PC-9 (cell line): ENCODE measurements at regions of chr6 and their contacts with region 1.

Region 1: DNA sequence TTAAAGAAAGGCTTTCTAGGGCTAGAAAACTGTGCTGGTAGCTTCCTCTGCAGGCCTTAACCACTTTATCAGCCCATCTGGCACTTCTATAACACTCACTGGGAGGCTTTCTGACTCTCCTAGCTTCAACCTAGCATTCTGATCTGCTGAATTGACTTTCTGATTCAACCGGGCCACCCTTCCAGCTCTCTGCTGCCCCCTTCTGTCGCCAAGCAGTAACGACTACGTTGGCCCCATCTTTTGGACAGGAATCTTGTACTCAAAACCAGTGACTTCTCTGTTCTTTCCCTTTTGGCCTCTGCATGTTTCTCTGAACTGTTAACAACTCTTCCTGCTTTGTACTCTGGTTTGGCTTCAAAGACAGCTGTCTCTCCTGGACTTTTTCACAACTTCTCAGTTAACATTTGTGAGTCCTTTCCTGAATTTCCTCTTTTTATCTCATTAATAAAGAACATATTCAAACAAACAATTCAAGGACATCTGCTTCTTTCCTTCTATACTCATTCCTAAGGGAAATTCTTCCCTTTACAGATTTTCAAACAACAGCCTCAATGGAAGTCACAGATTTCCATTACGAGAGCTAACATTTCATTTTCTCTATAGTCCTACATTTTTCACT is 43.9 kb upstream of the FAM135A start:
- DNase-seq: peak; percentile 46 to 67
- H3K4me3 ChIP-seq: no peak overlapping the region
- H3K27ac ChIP-seq: no peak overlapping the region
- H3K4me1 ChIP-seq: no peaks in the 10 kb centered on the region; the same call in 1 of the 2 replicates
- H3K27me3 ChIP-seq: peaks cover 65% of the 10 kb centered on the region
- CTCF ChIP-seq: peak; percentile 90

Region 2: DNA sequence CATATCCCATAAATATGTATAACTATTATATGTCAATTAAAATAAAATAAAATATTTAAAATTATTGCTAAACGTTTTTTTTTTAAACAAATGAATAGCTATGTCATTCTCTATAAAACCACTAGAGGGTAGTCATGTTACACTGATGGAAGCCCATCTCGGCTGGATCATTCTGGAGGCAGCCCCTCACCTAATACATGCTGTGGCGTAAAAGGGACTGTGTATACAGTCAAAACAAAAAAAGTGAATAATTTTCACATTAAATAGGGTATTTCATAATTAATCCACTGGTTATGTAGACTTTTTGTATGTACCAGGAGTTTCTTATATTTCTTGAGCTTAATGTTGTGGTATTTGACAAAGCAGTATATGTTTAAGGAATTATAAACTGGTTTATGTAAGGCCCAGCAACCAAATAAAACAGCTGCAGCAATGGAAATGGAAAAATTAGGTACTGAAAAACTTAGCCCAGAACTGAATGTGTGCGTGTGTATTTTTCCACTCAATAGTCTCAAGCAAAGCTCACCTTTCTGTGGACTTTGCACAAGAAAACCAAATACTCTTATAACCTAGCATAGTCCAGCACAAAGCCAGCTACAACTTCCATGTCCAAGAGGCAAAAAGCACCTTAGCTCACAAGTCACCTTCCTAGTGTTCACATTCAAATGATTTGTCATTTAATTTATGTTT is 148.3 kb before region 1 on chr6:
- CTCF ChIA-PET with region 1: interaction called, 11 read pairs
- POLR2A ChIA-PET with region 1: no interaction called
- intact Hi-C with region 1: loop called (anchors 2 kb)
- DNase-seq: no peak
- H3K4me3 ChIP-seq: no peak overlapping the region
- H3K27ac ChIP-seq: no peak overlapping the region
- H3K4me1 ChIP-seq: no peaks in the 10 kb centered on the region
- H3K27me3 ChIP-seq: peaks cover 4% of the 10 kb centered on the region; the same call in 1 of the 2 replicates
- CTCF ChIP-seq: peak; percentile 86

Region 3: GRCh38 chr6:70310063-70310694 is 59.3 kb before region 1 on chr6:
- CTCF ChIA-PET with region 1: interaction called, 10 read pairs
- POLR2A ChIA-PET with region 1: no interaction called
- intact Hi-C with region 1: loop called (anchors 1 kb)
- DNase-seq: peak in 1 of 2 experiments; percentile 48
- H3K4me3 ChIP-seq: no peak overlapping the region
- H3K27ac ChIP-seq: no peak overlapping the region
- H3K4me1 ChIP-seq: no peaks in the 10 kb centered on the region
- H3K27me3 ChIP-seq: peaks cover 49% of the 10 kb centered on the region
- CTCF ChIP-seq: peak; percentile 78

Region 4: DNA sequence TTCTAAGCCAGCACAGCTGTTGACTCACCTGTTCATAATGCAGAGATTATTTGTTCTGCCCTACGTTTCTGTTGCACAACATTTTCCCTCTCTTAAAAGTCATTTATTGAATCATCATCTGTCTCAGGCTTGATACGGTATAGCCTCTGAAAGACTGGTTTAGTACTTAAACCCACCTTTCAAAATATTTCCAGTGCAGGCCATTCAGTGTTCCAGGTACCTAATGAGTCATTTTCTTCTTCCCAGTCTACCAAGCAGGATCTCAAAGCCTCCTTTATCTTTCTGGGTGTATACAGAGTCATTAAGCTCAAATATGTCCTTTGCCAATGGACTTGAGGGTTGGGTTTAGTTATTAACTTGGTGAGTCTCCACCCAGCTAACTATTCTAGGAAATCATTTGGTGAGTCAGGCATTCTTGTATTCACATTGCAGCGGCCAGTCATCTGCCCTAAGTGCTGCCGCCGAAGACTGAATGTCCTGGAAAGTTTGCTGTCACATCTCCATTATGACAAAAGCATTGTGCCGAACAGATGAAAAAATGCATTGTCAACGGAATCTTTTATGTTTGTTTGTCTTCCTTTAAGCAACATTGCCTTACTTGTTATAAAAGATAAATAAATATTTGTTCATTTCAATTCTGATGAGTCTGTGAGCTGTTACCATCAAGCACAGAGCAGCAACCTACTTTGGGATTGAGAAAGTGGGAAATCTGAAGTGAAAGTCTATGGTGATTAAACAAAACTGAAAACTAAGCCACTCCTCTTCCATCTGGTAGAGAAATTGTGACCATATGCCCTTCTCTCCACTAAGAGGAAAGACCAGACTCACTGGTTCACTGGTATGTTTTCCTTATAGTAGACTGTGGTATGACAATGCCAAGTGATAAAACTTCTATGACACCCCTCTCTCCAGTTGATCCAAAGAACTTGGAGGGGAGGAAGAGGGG is 29.6 kb after region 1 on chr6:
- CTCF ChIA-PET with region 1: interaction called, 3 read pairs
- POLR2A ChIA-PET with region 1: no interaction called
- intact Hi-C with region 1: loop called (anchors 2 kb)
- DNase-seq: peak; percentile 60 to 99
- H3K4me3 ChIP-seq: peak overlapping the region; percentile 43; the same call in 1 of the 2 replicates
- H3K27ac ChIP-seq: peak overlapping the region; percentile 85
- H3K4me1 ChIP-seq: peaks cover 47% of the 10 kb centered on the region
- H3K27me3 ChIP-seq: no peaks in the 10 kb centered on the region
- CTCF ChIP-seq: no peak

Region 5: GRCh38 chr6:70686548-70687133 is 317.2 kb after region 1 on chr6:
- CTCF ChIA-PET with region 1: no interaction called
- POLR2A ChIA-PET with region 1: no interaction called
- intact Hi-C with region 1: loop called (anchors 5 kb)
- DNase-seq: peak in 1 of 2 experiments; percentile 40
- H3K4me3 ChIP-seq: no peak overlapping the region
- H3K27ac ChIP-seq: no peak overlapping the region
- H3K4me1 ChIP-seq: peaks cover 6% of the 10 kb centered on the region
- H3K27me3 ChIP-seq: no peaks in the 10 kb centered on the region
- CTCF ChIP-seq: peak; percentile 90

Region 6: GRCh38 chr6:70884074-70884983 is 514.9 kb after region 1 on chr6:
- CTCF ChIA-PET with region 1: no interaction called
- POLR2A ChIA-PET with region 1: no interaction called
- intact Hi-C with region 1: loop called (anchors 5 kb)
- DNase-seq: peak in 1 of 2 experiments; percentile 52
- H3K4me3 ChIP-seq: no peak overlapping the region
- H3K27ac ChIP-seq: no peak overlapping the region
- H3K4me1 ChIP-seq: no peaks in the 10 kb centered on the region
- H3K27me3 ChIP-seq: no peaks in the 10 kb centered on the region; the same call in 1 of the 2 replicates
- CTCF ChIP-seq: peak; percentile 96

Region 7: DNA sequence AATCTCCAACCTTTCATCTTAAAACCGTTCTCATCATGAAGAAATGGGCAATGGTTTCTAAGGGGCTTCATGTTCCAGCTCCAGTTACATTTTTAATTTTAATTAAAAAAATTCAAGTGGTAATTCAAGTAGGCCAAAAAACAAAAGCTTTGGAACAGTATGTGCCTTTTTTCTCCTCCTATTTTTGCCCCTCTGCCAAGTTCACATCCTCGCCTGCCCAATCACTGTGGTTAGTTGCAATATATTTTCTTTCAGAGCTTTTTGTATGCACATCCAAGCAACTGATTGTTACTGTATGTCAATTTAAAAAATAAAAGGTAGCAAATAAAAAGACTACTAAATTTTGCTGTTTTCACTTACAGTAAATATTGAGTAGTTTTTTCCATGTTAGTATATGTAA is 687.2 kb after region 1 on chr6:
- CTCF ChIA-PET with region 1: no interaction called
- POLR2A ChIA-PET with region 1: no interaction called
- intact Hi-C with region 1: no loop called
- DNase-seq: no peak
- H3K4me3 ChIP-seq: no peak overlapping the region
- H3K27ac ChIP-seq: no peak overlapping the region
- H3K4me1 ChIP-seq: no peaks in the 10 kb centered on the region
- H3K27me3 ChIP-seq: no peaks in the 10 kb centered on the region
- CTCF ChIP-seq: no peak